IMR-90 (cell line): ENCODE measurements at regions of chr13 and their contacts with region 1.

Region 1: GRCh38 chr13:107585469-107586180 is 629.7 kb downstream of the LIG4 start:
- DNase-seq: peak; percentile 46
- ATAC-seq: peak; percentile 30
- H3K4me3 ChIP-seq: no peak overlapping the region
- H3K27ac ChIP-seq: no peak overlapping the region
- H3K4me1 ChIP-seq: peaks cover 4% of the 10 kb centered on the region
- H3K27me3 ChIP-seq: no peaks in the 10 kb centered on the region
- CTCF ChIP-seq: no peak
- POLR2A ChIP-seq: no peak
- RAD21 ChIP-seq: no peak

Region 2: GRCh38 chr13:107534548-107534947 is 51.1 kb before region 1 on chr13:
- CTCF ChIA-PET with region 1: no interaction called
- POLR2A ChIA-PET with region 1: no interaction called
- dilution Hi-C with region 1: no loop called
- in situ Hi-C with region 1: no loop called
- intact Hi-C with region 1: no loop called
- DNase-seq: peak; percentile 34
- ATAC-seq: peak; percentile 91
- H3K4me3 ChIP-seq: no peak overlapping the region
- H3K27ac ChIP-seq: no peak overlapping the region
- H3K4me1 ChIP-seq: peaks cover 2% of the 10 kb centered on the region
- H3K27me3 ChIP-seq: no peaks in the 10 kb centered on the region
- CTCF ChIP-seq: no peak
- POLR2A ChIP-seq: no peak
- RAD21 ChIP-seq: no peak

Region 3: DNA sequence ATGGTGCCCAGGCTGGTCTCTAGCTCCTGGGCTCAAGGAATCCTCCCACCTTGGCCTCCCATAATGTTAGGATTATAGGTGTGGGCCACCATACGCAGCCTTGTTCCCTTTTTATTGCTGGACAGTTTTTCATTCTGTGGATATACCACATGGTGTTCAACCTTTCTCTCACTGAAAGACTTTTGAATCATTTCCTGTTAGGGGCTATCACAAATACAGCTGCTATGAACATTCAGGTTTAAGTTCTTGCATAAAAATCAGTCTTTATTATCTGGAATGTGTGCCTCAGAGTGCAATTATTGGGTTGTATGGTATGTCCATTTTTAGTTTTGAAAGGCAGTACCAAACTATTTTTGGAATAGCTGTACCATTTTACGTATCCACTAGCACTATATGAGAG is 17.4 kb before region 1 on chr13:
- CTCF ChIA-PET with region 1: no interaction called
- POLR2A ChIA-PET with region 1: no interaction called
- dilution Hi-C with region 1: no loop called
- in situ Hi-C with region 1: no loop called
- intact Hi-C with region 1: loop called (anchors 2 kb)
- DNase-seq: peak; percentile 31
- ATAC-seq: no peak
- H3K4me3 ChIP-seq: no peak overlapping the region
- H3K27ac ChIP-seq: no peak overlapping the region
- H3K4me1 ChIP-seq: peaks cover 2% of the 10 kb centered on the region; the same call in 1 of the 2 replicates
- H3K27me3 ChIP-seq: no peaks in the 10 kb centered on the region
- CTCF ChIP-seq: no peak
- POLR2A ChIP-seq: no peak
- RAD21 ChIP-seq: no peak

Region 4: DNA sequence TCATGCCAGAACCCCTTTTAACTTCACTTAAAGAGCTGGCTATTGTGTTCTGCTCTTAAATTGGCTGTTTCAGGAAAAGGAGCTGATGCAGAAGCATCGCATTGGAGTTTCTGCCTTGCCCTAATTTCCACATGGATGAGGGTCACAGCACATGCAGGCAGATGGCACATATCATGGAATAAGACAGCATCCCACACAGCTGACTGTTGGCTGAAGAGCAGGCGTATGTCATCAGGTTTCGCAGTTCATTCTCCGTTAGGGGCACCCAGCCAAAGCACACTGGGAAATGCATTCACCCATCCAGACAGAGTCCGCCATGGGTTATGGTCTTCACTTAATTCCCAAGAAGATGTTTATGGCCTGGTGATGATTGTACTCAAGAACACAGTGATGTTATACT is 57.2 kb after region 1 on chr13:
- CTCF ChIA-PET with region 1: no interaction called
- POLR2A ChIA-PET with region 1: no interaction called
- dilution Hi-C with region 1: no loop called
- in situ Hi-C with region 1: no loop called
- intact Hi-C with region 1: loop called (anchors 10 kb)
- DNase-seq: peak; percentile 55
- ATAC-seq: peak; percentile 64
- H3K4me3 ChIP-seq: no peak overlapping the region
- H3K27ac ChIP-seq: no peak overlapping the region
- H3K4me1 ChIP-seq: peaks cover 5% of the 10 kb centered on the region
- H3K27me3 ChIP-seq: no peaks in the 10 kb centered on the region
- CTCF ChIP-seq: no peak
- POLR2A ChIP-seq: no peak
- RAD21 ChIP-seq: no peak